CD4-positive, alpha-beta memory T cell (primary cell): ENCODE measurements at regions of chr9 and their contacts with region 1.

Region 1: GRCh38 chr9:70419546-70420266 is 5.2 kb upstream of the KLF9 start:
- DNase-seq: peak; percentile 85 to 97 (median 87)
- H3K4me3 ChIP-seq: peak overlapping the region; percentile 49 to 74
- H3K4me3 Mint-ChIP-seq: peak overlapping the region; percentile 90 to 98 (median 96)
- H3K27ac ChIP-seq: peak overlapping the region; percentile 91
- H3K27ac Mint-ChIP-seq: peak overlapping the region; percentile 99 to 100 (median 99)
- H3K4me1 ChIP-seq: peaks cover 44% of the 10 kb centered on the region
- H3K4me1 Mint-ChIP-seq: peaks cover 32 to 62% (median 41%) of the 10 kb centered on the region in 4 donors
- H3K27me3 ChIP-seq: no peaks in the 10 kb centered on the region
- H3K27me3 Mint-ChIP-seq: no peaks in the 10 kb centered on the region

Region 2: DNA sequence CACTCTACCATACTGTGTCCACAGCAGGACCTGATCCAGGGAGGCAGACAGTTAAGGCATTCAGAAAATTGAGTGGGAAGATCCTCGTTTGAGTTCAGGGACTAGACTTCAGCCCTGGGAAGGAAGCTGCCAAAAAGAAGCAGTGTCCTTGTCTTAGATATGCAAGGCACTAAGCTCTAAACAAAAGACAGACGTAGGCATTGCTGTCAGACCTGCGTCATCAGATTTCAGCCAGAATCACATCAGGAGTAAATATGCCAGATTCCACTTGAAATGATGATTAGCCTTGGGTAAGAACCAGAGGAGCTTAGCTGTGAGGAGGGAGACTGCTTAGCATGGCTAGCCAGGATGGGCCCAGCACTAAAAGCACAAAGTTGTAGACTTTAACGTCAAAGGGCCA is 319.3 kb before region 1 on chr9:
- CTCF ChIA-PET with region 1: no interaction called
- POLR2A ChIA-PET with region 1: no interaction called
- intact Hi-C with region 1: no loop called
- DNase-seq: no peak
- H3K4me3 ChIP-seq: no peak overlapping the region
- H3K4me3 Mint-ChIP-seq: no peak overlapping the region
- H3K27ac ChIP-seq: no peak overlapping the region
- H3K27ac Mint-ChIP-seq: no peak overlapping the region
- H3K4me1 ChIP-seq: no peaks in the 10 kb centered on the region
- H3K4me1 Mint-ChIP-seq: no peaks in the 10 kb centered on the region
- H3K27me3 ChIP-seq: no peaks in the 10 kb centered on the region
- H3K27me3 Mint-ChIP-seq: peaks cover 3 to 5% of the 10 kb centered on the region in 2 donors

Region 3: DNA sequence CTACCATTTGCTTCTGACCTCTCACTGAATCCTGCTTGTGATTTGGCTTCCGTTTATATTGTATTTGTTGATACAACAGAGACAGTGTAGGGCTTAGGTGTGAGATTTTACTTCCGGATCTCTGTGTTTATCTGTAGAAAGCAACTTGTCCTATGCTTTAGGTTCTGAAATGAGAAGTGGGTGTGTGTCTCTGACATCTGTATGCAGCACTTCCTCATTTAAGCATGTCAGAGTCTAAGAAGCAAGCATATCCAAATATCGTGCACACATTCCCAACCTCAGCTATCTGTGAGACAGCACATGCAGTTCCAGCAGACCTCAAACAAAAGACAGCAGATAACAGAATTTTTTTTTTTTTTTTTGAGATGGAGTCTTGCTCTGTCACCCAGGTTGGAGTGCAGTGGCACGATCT is 21.6 kb before region 1 on chr9:
- CTCF ChIA-PET with region 1: interaction called, 7 read pairs
- POLR2A ChIA-PET with region 1: interaction called, 104 read pairs
- intact Hi-C with region 1: loop called (anchors 1 kb)
- DNase-seq: peak; percentile 42 to 56 (median 54)
- H3K4me3 ChIP-seq: peak overlapping the region in 1 of 2 donors; percentile 0
- H3K4me3 Mint-ChIP-seq: peak overlapping the region; percentile 60 to 81 (median 76)
- H3K27ac ChIP-seq: peak overlapping the region; percentile 46
- H3K27ac Mint-ChIP-seq: peak overlapping the region; percentile 53 to 92 (median 78)
- H3K4me1 ChIP-seq: peaks cover 83% of the 10 kb centered on the region
- H3K4me1 Mint-ChIP-seq: peaks cover 53 to 82% (median 68%) of the 10 kb centered on the region in 4 donors
- H3K27me3 ChIP-seq: no peaks in the 10 kb centered on the region
- H3K27me3 Mint-ChIP-seq: no peaks in the 10 kb centered on the region

Region 4: GRCh38 chr9:70466976-70467561 is 47.4 kb after region 1 on chr9:
- CTCF ChIA-PET with region 1: interaction called, 3 read pairs
- POLR2A ChIA-PET with region 1: interaction called, 27 read pairs
- intact Hi-C with region 1: loop called (anchors 5 kb)
- DNase-seq: no peak
- H3K4me3 ChIP-seq: no peak overlapping the region
- H3K4me3 Mint-ChIP-seq: no peak overlapping the region
- H3K27ac ChIP-seq: no peak overlapping the region
- H3K27ac Mint-ChIP-seq: peak overlapping the region in 1 of 7 donors; percentile 36
- H3K4me1 ChIP-seq: peaks cover 23% of the 10 kb centered on the region
- H3K4me1 Mint-ChIP-seq: peaks cover 26 to 41% (median 36%) of the 10 kb centered on the region in 4 donors
- H3K27me3 ChIP-seq: no peaks in the 10 kb centered on the region
- H3K27me3 Mint-ChIP-seq: no peaks in the 10 kb centered on the region

Region 5: DNA sequence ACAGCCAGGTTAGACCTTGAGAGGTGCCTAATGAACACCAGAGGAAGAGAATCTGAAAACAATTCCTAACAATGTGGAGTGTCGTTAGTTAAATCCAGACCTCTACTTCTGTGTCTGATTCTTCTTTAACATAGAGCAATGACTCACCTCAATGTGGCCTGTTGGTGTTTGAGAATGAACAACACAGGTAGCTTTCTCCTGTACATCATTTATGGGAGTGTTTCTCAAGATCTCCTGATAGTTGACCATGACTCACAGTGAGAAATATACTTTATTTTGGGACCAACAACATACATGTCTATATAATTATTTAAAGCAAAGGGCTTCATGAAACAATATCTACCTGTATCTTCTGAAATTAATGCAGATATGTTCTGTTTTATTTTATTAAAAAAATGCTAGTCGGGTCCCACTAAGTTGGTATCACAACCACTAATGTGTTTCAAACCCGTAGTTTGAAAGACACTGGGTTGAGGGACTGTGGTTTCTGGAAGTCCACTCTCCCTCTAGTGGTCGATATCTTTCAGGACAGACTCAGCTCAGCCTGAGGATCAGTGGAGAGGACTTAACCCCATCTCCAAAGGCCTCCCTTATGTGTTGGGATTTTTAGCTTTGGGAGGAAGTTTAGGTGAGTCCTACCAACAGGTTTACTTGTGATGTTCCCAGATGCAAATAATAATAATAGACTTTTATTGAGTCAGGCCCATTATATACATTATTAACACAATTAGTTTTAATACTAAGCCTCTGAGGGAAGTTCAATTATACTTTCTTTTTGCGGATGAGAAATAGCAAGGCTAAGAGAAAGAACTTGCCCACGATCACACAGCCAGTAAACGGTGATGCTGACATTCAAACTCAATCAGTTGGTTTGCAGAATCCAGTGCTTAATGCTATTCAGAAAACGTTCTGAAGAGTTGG is 64.8 kb after region 1 on chr9:
- CTCF ChIA-PET with region 1: interaction called, 14 read pairs
- POLR2A ChIA-PET with region 1: interaction called, 27 read pairs
- intact Hi-C with region 1: loop called (anchors 1 kb)
- DNase-seq: peak in 4 of 5 donors; percentile 32 to 48 (median 38)
- H3K4me3 ChIP-seq: no peak overlapping the region
- H3K4me3 Mint-ChIP-seq: no peak overlapping the region
- H3K27ac ChIP-seq: no peak overlapping the region
- H3K27ac Mint-ChIP-seq: peak overlapping the region in 2 of 7 donors; percentile 67 to 70
- H3K4me1 ChIP-seq: peaks cover 7% of the 10 kb centered on the region
- H3K4me1 Mint-ChIP-seq: peaks cover 0 to 7% (median 2%) of the 10 kb centered on the region in 4 donors
- H3K27me3 ChIP-seq: no peaks in the 10 kb centered on the region
- H3K27me3 Mint-ChIP-seq: peaks cover 0 to 3% of the 10 kb centered on the region in 2 donors

Region 6: DNA sequence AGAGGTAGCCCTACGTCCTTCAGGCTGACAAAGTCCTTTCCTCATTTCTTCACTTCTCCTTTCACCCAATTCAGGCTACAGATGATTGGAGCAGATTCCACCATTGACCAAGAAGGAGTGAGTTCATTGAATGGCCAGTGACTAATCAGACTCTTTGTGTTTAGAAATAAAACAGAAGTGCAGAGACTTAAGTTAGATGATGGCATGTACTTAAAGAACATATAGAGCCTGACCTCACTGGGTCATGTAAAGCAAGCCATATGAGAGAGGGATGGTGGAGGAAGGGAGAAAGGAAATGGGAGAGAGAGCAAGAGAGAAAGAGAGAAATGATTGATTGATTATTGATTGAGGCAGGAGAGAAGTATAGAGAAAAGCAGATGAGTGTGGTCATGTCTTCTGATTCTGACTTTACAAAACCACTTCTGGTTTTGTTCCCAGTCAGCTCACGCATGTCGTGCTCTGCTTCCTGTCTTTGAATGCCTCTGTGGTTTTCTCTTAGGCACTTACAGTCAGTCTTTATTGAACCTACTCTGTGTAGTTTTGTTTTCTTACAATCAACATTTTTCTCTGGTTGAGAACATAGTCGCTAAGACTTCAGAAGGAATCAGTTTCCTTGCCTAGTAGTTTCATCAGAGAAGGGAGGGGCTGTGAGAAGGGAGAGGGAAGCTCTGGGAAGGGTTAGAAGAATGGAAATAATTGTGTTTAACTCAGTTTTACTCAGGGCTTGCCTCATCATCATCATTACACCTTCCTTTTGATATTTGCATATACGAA is 143.9 kb after region 1 on chr9:
- CTCF ChIA-PET with region 1: interaction called, 4 read pairs
- POLR2A ChIA-PET with region 1: interaction called, 15 read pairs
- intact Hi-C with region 1: loop called (anchors 1 kb)
- DNase-seq: peak; percentile 56 to 72 (median 60)
- H3K4me3 ChIP-seq: peak overlapping the region in 1 of 2 donors; percentile 6
- H3K4me3 Mint-ChIP-seq: peak overlapping the region; percentile 39 to 78 (median 66)
- H3K27ac ChIP-seq: peak overlapping the region; percentile 12
- H3K27ac Mint-ChIP-seq: peak overlapping the region; percentile 74 to 97 (median 95)
- H3K4me1 ChIP-seq: peaks cover 29% of the 10 kb centered on the region
- H3K4me1 Mint-ChIP-seq: peaks cover 25 to 34% (median 28%) of the 10 kb centered on the region in 4 donors
- H3K27me3 ChIP-seq: no peaks in the 10 kb centered on the region
- H3K27me3 Mint-ChIP-seq: no peaks in the 10 kb centered on the region